Activated CD4-positive, alpha-beta T cell treated with anti-CD3 and anti-CD28 coated beads for 36 hours (primary cell): ENCODE measurements at regions of chr11 and their contacts with region 1.

Region 1: GRCh38 chr11:128407962-128408361 is 179.4 kb downstream of the ETS1 start:
- DNase-seq: no peak
- ATAC-seq: no peak
- H3K4me3 Mint-ChIP-seq: no peak overlapping the region
- H3K27ac Mint-ChIP-seq: no peak overlapping the region
- H3K4me1 Mint-ChIP-seq: peaks cover 45% of the 10 kb centered on the region
- H3K27me3 Mint-ChIP-seq: no peaks in the 10 kb centered on the region

Region 2: DNA sequence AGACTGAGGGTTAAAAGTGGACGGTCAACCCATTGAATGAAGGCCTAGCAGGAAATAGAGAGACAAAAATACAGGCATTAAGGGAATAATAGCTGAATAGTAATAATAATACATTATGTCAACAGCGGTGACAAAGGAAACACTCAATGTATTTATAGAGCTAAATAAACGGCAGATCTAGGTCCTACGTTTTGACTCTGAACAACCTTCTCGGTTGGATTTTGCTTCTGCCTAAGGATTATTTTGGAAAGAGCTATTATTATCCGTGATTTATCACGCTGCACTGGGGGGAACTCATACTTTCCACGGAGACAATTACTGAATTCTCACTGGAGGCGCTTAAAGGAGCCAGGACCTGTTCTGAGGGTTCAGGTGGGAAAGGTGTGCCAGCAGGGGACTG is 1289.2 kb before region 1 on chr11:
- CTCF ChIA-PET with region 1: no interaction called
- POLR2A ChIA-PET with region 1: no interaction called
- intact Hi-C with region 1: no loop called
- DNase-seq: no peak
- ATAC-seq: no peak
- H3K4me3 Mint-ChIP-seq: no peak overlapping the region
- H3K27ac Mint-ChIP-seq: no peak overlapping the region
- H3K4me1 Mint-ChIP-seq: no peaks in the 10 kb centered on the region
- H3K27me3 Mint-ChIP-seq: peaks cover 1% of the 10 kb centered on the region

Region 3: GRCh38 chr11:128251140-128251539 is 156.8 kb before region 1 on chr11:
- CTCF ChIA-PET with region 1: no interaction called
- POLR2A ChIA-PET with region 1: no interaction called
- intact Hi-C with region 1: no loop called
- DNase-seq: no peak
- ATAC-seq: no peak
- H3K4me3 Mint-ChIP-seq: no peak overlapping the region
- H3K27ac Mint-ChIP-seq: no peak overlapping the region
- H3K4me1 Mint-ChIP-seq: no peaks in the 10 kb centered on the region
- H3K27me3 Mint-ChIP-seq: no peaks in the 10 kb centered on the region

Region 4: DNA sequence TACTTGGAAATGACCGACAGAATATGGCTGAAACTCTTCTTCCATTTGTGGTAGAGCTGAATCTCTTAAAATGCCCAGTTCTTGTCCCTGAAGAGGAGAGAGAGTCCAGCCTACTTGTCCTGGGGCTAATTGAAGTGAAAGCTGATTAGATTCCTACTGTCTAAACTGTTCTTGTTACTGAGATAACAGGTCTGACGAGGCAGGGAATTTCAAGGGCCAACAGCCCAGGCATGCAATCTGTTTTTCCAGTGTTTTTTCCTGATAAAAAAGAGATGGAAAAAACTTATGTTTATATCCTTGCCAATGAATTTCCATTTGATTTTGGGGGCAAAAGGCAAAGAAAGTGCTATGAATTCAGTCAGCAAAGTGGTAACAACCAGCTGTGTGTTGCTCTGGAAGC is 16.2 kb before region 1 on chr11:
- CTCF ChIA-PET with region 1: interaction called, 12 read pairs
- POLR2A ChIA-PET with region 1: no interaction called
- intact Hi-C with region 1: no loop called
- DNase-seq: no peak
- ATAC-seq: no peak
- H3K4me3 Mint-ChIP-seq: no peak overlapping the region
- H3K27ac Mint-ChIP-seq: no peak overlapping the region
- H3K4me1 Mint-ChIP-seq: peaks cover 27% of the 10 kb centered on the region
- H3K27me3 Mint-ChIP-seq: no peaks in the 10 kb centered on the region

Region 5: GRCh38 chr11:128603752-128604414 is 195.9 kb after region 1 on chr11:
- CTCF ChIA-PET with region 1: no interaction called
- POLR2A ChIA-PET with region 1: no interaction called
- intact Hi-C with region 1: no loop called
- DNase-seq: no peak
- ATAC-seq: no peak
- H3K4me3 Mint-ChIP-seq: no peak overlapping the region
- H3K27ac Mint-ChIP-seq: peak overlapping the region; percentile 7
- H3K4me1 Mint-ChIP-seq: peaks cover 55% of the 10 kb centered on the region
- H3K27me3 Mint-ChIP-seq: no peaks in the 10 kb centered on the region